Activated CD8-positive, alpha-beta T cell treated with anti-CD3 and anti-CD28 coated beads for 36 hours (primary cell): ENCODE measurements at regions of chr12 and their contacts with region 1.

Region 1: GRCh38 chr12:48851883-48852733 is at the start of gene DDX23:
- DNase-seq: peak; percentile 96
- ATAC-seq: peak; percentile 96
- H3K4me3 Mint-ChIP-seq: peak within 1 kb of the TSS; percentile 97
- H3K27ac Mint-ChIP-seq: peak within 1 kb of the TSS; percentile 96
- H3K4me1 Mint-ChIP-seq: peaks cover 27% of the 10 kb centered on the region
- H3K27me3 Mint-ChIP-seq: no peaks in the 10 kb centered on the region
- CTCF ChIP-seq: no peak
- total RNA-seq, gene DDX23: 84.5 to 95.6 TPM

Region 2: GRCh38 chr12:48773686-48774085 is 78.4 kb before region 1 on chr12:
- CTCF ChIA-PET with region 1: no interaction called
- POLR2A ChIA-PET with region 1: no interaction called
- intact Hi-C with region 1: no loop called
- DNase-seq: no peak
- ATAC-seq: no peak
- H3K4me3 Mint-ChIP-seq: no peak overlapping the region
- H3K27ac Mint-ChIP-seq: no peak overlapping the region
- H3K4me1 Mint-ChIP-seq: no peaks in the 10 kb centered on the region
- H3K27me3 Mint-ChIP-seq: no peaks in the 10 kb centered on the region
- CTCF ChIP-seq: no peak

Region 3: GRCh38 chr12:48803675-48804074 is 48.4 kb before region 1 on chr12:
- CTCF ChIA-PET with region 1: no interaction called
- POLR2A ChIA-PET with region 1: no interaction called
- intact Hi-C with region 1: no loop called
- DNase-seq: no peak
- ATAC-seq: peak; percentile 34
- H3K4me3 Mint-ChIP-seq: no peak overlapping the region
- H3K27ac Mint-ChIP-seq: no peak overlapping the region
- H3K4me1 Mint-ChIP-seq: peaks cover 5% of the 10 kb centered on the region
- H3K27me3 Mint-ChIP-seq: no peaks in the 10 kb centered on the region
- CTCF ChIP-seq: no peak

Region 4: GRCh38 chr12:48814262-48815125 is 37.6 kb before region 1 on chr12:
- CTCF ChIA-PET with region 1: interaction called, 25 read pairs
- POLR2A ChIA-PET with region 1: interaction called, 13 read pairs
- intact Hi-C with region 1: no loop called
- DNase-seq: peak; percentile 86
- ATAC-seq: peak; percentile 83
- H3K4me3 Mint-ChIP-seq: peak overlapping the region; percentile 95
- H3K27ac Mint-ChIP-seq: peak overlapping the region; percentile 67
- H3K4me1 Mint-ChIP-seq: peaks cover 34% of the 10 kb centered on the region
- H3K27me3 Mint-ChIP-seq: peaks cover 19% of the 10 kb centered on the region
- CTCF ChIP-seq: peak; percentile 100

Region 5: DNA sequence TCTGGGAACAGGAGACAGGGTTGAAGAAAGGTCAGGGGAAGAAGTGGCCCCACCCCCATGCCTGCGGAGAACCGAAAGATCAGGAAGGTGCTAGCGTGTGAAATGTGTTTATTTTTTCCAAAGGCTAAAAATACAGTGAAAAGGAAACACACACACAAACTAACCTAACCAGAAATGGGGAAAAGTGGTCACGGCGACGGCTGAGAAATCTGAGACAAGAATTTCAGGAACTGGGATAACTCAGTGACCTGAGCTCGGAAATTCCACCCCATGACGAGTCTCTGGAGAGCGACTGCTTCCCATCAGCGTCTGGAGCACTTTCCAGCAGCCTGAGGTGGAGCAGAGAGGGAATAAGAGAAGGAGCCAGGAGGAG is 30.2 kb after region 1 on chr12:
- CTCF ChIA-PET with region 1: interaction called, 39 read pairs
- POLR2A ChIA-PET with region 1: no interaction called
- intact Hi-C with region 1: no loop called
- DNase-seq: no peak
- ATAC-seq: no peak
- H3K4me3 Mint-ChIP-seq: no peak overlapping the region
- H3K27ac Mint-ChIP-seq: no peak overlapping the region
- H3K4me1 Mint-ChIP-seq: no peaks in the 10 kb centered on the region
- H3K27me3 Mint-ChIP-seq: peaks cover 22% of the 10 kb centered on the region
- CTCF ChIP-seq: no peak

Region 6: GRCh38 chr12:48924617-48925303 is 72.7 kb after region 1 on chr12:
- CTCF ChIA-PET with region 1: interaction called, 25 read pairs
- POLR2A ChIA-PET with region 1: interaction called, 25 read pairs
- intact Hi-C with region 1: no loop called
- DNase-seq: peak; percentile 87
- ATAC-seq: peak; percentile 76
- H3K4me3 Mint-ChIP-seq: peak overlapping the region; percentile 88
- H3K27ac Mint-ChIP-seq: peak overlapping the region; percentile 96
- H3K4me1 Mint-ChIP-seq: peaks cover 48% of the 10 kb centered on the region
- H3K27me3 Mint-ChIP-seq: no peaks in the 10 kb centered on the region
- CTCF ChIP-seq: peak; percentile 85

Region 7: DNA sequence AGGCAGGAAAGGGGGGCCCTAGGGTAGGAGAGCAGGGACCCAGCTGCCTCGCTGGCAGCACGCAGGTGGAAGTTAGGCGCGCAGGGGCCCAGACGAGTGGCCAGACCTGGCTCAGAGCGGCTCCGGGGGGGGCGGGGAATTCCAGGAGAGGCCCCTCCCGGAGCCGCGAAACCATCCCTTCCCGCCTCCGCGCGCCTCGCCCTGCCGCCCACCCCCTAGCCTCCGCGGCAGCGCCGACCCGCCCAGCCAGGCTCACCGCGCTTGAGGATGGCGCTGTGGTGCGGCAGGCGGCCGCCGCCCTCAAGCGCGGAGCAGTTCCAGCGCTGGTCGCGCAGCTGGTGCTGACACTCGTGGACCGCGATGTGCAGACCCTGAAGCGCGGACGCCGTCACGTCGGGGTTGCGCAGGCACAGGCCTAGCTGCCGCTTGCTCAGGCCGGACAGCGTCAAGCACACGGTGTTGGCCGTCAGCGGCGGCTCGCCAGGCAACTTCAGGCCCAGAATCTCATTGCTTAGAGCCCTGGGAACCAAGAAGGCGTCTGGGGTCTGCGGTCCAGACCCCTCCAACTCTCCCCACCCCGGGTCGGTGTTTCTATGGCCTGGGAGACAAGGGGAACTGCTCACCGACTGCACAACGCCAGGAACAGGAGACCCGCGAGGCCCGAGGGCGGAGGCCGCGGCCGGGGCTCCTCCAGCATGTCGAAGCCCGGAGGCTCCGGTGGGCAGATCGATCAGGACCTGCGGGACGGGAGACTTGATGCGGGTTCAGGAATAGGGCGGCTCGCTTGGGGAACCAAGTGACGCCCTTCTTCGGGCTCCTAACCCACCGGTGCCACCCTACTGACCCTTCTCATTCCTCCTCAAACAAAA is 118.0 kb after region 1 on chr12:
- CTCF ChIA-PET with region 1: interaction called, 11 read pairs
- POLR2A ChIA-PET with region 1: no interaction called
- intact Hi-C with region 1: loop called (anchors 5 kb)
- DNase-seq: peak; percentile 26
- ATAC-seq: peak; percentile 14
- H3K4me3 Mint-ChIP-seq: peak overlapping the region; percentile 17
- H3K27ac Mint-ChIP-seq: no peak overlapping the region
- H3K4me1 Mint-ChIP-seq: peaks cover 48% of the 10 kb centered on the region
- H3K27me3 Mint-ChIP-seq: peaks cover 34% of the 10 kb centered on the region
- CTCF ChIP-seq: no peak

Region 8: GRCh38 chr12:48995061-48995879 is 143.2 kb after region 1 on chr12:
- CTCF ChIA-PET with region 1: interaction called, 29 read pairs
- POLR2A ChIA-PET with region 1: interaction called, 3 read pairs
- intact Hi-C with region 1: no loop called
- DNase-seq: peak; percentile 71
- ATAC-seq: no peak
- H3K4me3 Mint-ChIP-seq: no peak overlapping the region
- H3K27ac Mint-ChIP-seq: no peak overlapping the region
- H3K4me1 Mint-ChIP-seq: peaks cover 24% of the 10 kb centered on the region
- H3K27me3 Mint-ChIP-seq: peaks cover 39% of the 10 kb centered on the region
- CTCF ChIP-seq: peak; percentile 84